AG04449 (cell line): ENCODE measurements at regions of chrX and their contacts with region 1.

Region 1: DNA sequence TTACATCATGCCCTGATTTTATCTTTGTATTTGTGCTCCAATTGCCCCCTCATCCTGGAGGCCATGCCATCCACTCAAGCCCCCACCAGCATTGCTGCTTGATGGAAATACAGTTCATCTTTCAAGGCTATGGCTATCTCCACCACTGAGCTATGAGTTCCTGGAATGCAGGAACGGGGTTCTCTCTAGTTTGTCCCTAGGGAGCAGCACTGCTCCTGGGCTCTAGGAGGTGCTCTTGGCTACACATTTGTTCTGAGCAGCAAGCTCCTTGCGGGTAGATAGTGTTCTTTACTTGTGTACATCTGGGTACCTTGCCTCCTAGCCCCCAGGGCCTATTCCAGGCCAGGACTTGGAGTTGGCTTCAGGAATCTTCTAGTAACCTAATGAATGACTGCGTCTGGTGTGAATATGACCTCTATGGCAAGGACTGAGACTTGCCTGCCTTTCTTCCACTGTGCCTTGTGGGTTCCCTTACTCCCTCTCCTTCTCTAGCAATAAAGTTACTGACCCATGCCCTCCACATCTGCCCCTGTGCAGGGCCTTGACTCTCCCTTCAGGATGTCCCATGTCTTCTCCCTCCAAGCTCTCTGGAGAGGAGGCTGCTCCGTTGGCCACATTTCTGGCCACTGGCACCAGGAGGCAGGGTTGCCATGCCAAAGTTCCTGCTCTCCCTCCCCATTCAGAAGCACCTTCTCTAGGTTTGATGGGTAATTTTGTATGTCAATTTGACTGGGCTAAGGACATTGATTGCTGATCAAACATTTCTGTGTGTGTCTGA is 7.6 kb downstream of the CITED1 start:
- DNase-seq: no peak
- H3K4me3 ChIP-seq: no peak overlapping the region
- CTCF ChIP-seq: no peak

Region 2: GRCh38 chrX:72276478-72276953 is 21.6 kb before region 1 on chrX:
- CTCF ChIA-PET with region 1: interaction called, 12 read pairs
- POLR2A ChIA-PET with region 1: no interaction called
- DNase-seq: no peak
- H3K4me3 ChIP-seq: peak overlapping the region; percentile 73
- CTCF ChIP-seq: no peak

Region 3: DNA sequence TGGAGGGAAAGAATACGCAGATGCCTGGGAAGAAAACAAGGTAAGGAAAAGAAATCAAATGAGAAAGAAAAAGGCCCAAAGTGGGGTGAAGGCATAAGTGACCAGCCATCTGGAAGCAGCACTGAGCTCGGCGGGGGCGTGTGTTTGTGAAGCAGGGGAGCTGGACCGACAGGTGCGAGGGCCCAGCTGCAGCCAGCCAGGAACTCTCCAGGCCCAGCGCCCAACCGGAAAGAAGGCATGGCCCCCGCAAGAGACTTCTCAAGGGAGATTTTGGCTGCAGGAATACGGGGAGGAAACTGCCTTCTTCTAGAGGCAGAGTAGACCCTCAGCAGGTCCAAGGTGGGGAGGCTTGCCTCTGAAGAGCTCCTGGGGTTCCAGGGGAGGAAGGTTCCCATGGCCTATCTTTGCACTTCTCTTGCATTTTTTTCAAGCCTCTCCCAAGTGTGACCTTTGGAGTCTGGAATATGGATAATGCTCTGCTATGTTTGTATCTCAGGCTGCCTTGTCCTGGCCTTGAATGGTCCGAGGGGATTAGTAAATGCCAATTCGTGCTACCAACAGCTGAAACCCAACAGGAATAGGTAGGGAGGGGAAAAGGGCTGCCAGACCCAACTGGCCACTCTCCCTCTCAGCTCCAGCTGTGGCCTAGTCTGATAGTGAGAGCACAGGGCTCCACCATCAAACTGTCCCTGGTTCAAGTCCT is 18.4 kb after region 1 on chrX:
- CTCF ChIA-PET with region 1: no interaction called
- POLR2A ChIA-PET with region 1: no interaction called
- DNase-seq: no peak
- H3K4me3 ChIP-seq: no peak overlapping the region
- CTCF ChIP-seq: no peak

Region 4: DNA sequence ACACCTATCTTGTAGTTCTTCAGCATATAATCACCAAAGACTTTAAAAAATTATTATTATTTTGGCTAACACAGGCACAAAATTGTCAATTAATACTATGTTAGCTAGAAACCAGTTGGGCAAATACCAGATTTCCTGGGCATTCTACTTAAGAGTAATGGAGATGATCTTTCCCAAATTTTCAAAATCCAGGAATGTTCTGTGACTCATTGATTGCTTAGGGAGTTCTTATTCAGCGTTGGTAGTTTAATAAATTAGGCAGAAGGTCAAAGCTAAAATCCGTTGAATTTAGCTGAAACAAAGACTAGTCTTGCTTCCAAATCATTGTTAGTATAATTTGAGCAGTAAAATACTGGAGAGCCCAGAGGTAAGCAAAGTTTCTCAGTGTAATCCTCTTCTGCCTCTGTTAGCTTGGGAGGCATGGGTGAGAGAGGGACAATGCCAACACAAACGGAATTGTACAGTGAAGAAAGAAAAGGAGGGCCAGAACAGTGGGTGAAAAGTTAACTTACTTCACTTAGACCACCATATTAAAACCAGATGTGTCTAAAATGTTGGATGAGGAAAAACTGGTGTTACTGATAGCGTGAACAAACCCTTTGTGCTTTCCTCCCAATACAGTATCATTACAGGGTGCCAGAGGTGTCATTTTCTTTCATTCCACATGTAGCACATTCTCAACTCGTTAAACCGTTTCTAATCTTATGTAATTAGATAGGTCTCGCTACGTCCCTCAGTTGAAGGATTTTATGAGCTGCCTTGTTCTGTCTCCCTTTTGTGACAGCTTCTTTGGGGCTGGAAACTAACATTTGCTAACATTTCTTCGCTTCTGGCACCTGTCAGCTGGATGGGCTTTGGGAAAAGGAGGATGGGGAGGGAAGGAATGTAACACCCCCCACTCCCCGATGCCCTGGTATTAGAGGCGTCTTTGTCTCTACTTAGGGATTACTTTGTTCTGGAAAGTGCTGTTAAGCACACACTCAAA is 95.0 kb after region 1 on chrX:
- CTCF ChIA-PET with region 1: no interaction called
- POLR2A ChIA-PET with region 1: no interaction called
- DNase-seq: no peak
- H3K4me3 ChIP-seq: no peak overlapping the region
- CTCF ChIP-seq: no peak

Region 5: GRCh38 chrX:72694170-72694569 is 396.0 kb after region 1 on chrX:
- CTCF ChIA-PET with region 1: no interaction called
- POLR2A ChIA-PET with region 1: no interaction called
- DNase-seq: no peak
- H3K4me3 ChIP-seq: no peak overlapping the region
- CTCF ChIP-seq: no peak